Naive thymus-derived CD4-positive, alpha-beta T cell (primary cell): ENCODE measurements at regions of chr15 and their contacts with region 1.

Region 1: DNA sequence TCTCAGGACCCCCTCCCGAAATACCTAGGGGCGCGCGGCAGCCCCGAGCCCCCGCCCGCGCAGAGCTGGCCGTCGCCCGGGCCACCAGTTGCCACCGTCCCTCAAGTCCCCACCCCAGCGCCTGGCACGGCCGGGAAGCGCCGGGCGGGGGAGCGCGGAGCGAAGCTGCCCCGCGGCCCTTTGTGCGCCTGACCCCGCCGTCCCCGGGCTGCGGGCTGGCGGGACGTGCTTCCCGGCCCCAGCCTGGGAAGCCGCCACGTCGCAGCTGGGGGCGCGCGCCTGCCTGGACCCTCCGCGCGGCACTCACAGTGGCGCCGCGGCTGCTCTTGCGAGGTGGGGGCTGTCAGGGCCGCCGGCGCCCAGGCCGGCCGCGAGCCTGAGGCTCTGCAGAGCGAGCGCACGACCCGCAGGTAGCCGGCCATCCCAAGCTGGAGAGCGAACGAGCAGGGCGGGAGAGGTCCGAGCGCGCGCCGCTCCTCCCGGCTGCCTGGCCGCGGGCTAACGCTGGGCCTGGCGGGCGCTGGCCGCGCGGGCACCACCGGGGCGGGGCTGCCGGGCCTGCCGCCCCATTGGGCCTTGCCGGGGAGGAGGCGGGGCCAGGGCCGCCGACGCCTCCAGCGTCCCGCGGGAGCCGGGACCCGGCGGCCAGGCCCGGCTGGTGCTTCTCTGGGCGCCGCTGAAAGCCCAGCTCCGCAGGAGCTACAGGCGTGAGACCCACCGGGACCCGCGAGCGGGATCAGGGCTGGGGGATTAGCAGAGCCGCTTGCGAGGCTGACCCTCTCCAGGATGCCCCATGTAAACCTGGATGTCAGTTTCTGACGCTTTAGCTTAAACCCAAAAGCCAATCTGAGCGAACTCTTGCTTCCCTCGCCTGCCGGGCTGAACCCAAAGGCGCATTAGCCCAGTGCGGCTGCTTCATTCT is at the start of gene IDH2:
- DNase-seq: peak; percentile 60 to 86 (median 74)
- ATAC-seq: peak; percentile 89
- H3K4me3 ChIP-seq: peak within 1 kb of the TSS; percentile 78
- H3K4me3 Mint-ChIP-seq: peak within 1 kb of the TSS; percentile 82 to 97 (median 92)
- H3K27ac ChIP-seq: peak within 1 kb of the TSS; percentile 90
- H3K27ac Mint-ChIP-seq: peak within 1 kb of the TSS; percentile 94 to 99 (median 98)
- H3K4me1 ChIP-seq: peaks cover 38 to 44% of the 10 kb centered on the region in 2 donors
- H3K4me1 Mint-ChIP-seq: peaks cover 43 to 60% (median 52%) of the 10 kb centered on the region in 7 donors
- H3K27me3 ChIP-seq: no peaks in the 10 kb centered on the region
- H3K27me3 Mint-ChIP-seq: peaks cover 0 to 24% (median 0%) of the 10 kb centered on the region in 5 donors
- total RNA-seq, gene IDH2: 32.4 to 230 (median 33.7) TPM

Region 2: DNA sequence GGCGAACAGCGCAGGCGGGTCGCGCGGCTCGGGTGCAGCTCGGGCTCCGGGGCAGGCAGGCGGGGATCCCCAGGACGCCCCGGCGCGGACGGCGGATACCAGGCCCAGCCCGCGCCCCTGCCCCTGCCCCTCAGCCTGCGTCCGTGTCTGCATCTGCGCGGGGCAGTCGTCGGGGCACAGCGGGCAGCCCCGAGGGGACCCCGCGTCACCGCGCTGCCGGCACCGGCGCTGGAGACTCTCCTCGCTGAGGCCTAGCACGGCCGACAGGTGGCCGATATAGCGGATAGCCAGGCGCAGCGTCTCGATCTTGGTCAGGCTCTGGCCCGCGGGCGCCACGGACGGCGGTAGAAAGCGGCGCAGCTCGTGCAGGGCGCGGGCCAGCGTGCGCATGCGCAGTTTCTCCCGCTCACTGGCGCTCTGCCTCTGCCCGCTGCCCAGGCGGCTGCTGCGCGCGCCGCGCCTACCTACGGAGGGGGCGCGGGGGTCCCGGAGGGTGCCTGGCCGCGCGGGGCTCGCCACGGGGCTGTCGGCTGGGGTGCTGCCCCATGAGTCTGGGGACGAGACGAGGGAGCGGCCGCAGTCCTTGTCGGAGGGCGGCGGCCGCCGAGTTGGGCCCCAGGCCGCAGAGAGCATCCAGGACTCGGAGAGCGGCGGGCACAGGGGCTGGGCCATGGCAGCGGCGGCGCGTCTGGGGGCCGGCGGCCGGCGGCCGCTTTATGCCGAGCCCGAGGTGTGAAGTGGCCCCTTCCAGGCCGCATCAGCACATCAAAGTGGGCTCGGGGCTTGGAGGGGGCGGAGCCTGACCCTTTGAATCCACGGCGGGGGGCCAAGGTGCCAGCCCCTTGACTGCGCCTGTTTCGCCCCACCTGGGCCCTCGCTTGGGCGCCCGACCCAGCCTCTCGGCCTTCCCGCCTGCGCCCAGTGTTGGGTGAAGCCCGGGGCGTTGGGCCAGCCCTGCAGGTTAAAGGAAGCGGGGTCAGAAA is 351.4 kb before region 1 on chr15 and contains the start of gene MESP1:
- CTCF ChIA-PET with region 1: no interaction called
- POLR2A ChIA-PET with region 1: no interaction called
- intact Hi-C with region 1: loop called in 1 of 2 experiments (anchors 5 kb)
- DNase-seq: peak; percentile 71 to 89 (median 82)
- ATAC-seq: peak; percentile 94
- H3K4me3 ChIP-seq: peak within 1 kb of the TSS; percentile 64
- H3K4me3 Mint-ChIP-seq: peak within 1 kb of the TSS; percentile 63 to 83 (median 77)
- H3K27ac ChIP-seq: peak within 1 kb of the TSS; percentile 31
- H3K27ac Mint-ChIP-seq: peak within 1 kb of the TSS in 3 of 9 donors; percentile 25 to 63 (median 53)
- H3K4me1 ChIP-seq: no peaks in the 10 kb centered on the region
- H3K4me1 Mint-ChIP-seq: peaks cover 0 to 8% (median 3%) of the 10 kb centered on the region in 7 donors
- H3K27me3 ChIP-seq: no peaks in the 10 kb centered on the region
- H3K27me3 Mint-ChIP-seq: peaks cover 0 to 50% (median 15%) of the 10 kb centered on the region in 5 donors
- total RNA-seq, gene MESP1: 0.38 to 1.2 (median 0.50) TPM in 3 of 5 experiments, not detected in the others

Region 3: GRCh38 chr15:90001683-90002427 is 100.4 kb before region 1 on chr15:
- CTCF ChIA-PET with region 1: no interaction called
- POLR2A ChIA-PET with region 1: interaction called, 3 read pairs
- intact Hi-C with region 1: loop called in 1 of 2 experiments (anchors 2 kb)
- DNase-seq: peak; percentile 41 to 78 (median 65)
- ATAC-seq: peak; percentile 68
- H3K4me3 ChIP-seq: no peak overlapping the region
- H3K4me3 Mint-ChIP-seq: peak overlapping the region; percentile 85 to 98 (median 90)
- H3K27ac ChIP-seq: peak overlapping the region; percentile 61
- H3K27ac Mint-ChIP-seq: peak overlapping the region; percentile 85 to 97 (median 91)
- H3K4me1 ChIP-seq: peaks cover 6 to 8% of the 10 kb centered on the region in 2 donors
- H3K4me1 Mint-ChIP-seq: peaks cover 37 to 57% (median 48%) of the 10 kb centered on the region in 7 donors
- H3K27me3 ChIP-seq: no peaks in the 10 kb centered on the region
- H3K27me3 Mint-ChIP-seq: peaks cover 0 to 6% (median 0%) of the 10 kb centered on the region in 5 donors

Region 4: DNA sequence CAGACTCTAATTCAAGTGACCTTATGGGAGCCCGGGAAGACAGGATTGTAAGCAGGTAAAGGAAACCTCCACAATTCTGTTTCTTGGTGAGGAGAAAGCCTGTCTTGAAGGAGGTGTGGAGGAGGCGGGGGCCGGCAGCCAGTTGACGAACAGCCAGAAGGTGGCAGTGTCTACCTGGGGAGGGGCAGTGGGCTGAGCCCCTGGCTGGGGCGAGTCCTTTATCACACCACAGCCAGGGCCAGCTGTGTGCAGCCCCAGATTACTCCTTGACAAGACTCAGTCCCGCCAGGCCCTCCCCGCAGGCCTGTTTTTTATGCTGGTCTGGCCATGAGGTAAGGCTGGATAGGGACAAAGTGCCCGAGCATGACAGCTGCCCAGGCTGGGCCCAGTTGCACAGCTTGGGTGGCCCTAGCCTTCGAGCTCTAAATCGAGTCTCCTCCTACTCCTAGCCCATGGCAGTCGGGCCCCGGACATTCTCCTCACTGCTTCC is 41.0 kb after region 1 on chr15:
- CTCF ChIA-PET with region 1: interaction called, 11 read pairs
- POLR2A ChIA-PET with region 1: interaction called, 3 read pairs
- intact Hi-C with region 1: loop called (anchors 1 kb)
- DNase-seq: peak; percentile 50 to 67 (median 58)
- ATAC-seq: peak; percentile 88
- H3K4me3 ChIP-seq: peak overlapping the region; percentile 9
- H3K4me3 Mint-ChIP-seq: peak overlapping the region; percentile 49 to 77 (median 67)
- H3K27ac ChIP-seq: no peak overlapping the region
- H3K27ac Mint-ChIP-seq: peak overlapping the region in 8 of 9 donors; percentile 37 to 92 (median 79)
- H3K4me1 ChIP-seq: peaks cover 0 to 4% of the 10 kb centered on the region in 2 donors
- H3K4me1 Mint-ChIP-seq: peaks cover 6 to 36% (median 26%) of the 10 kb centered on the region in 7 donors
- H3K27me3 ChIP-seq: no peaks in the 10 kb centered on the region
- H3K27me3 Mint-ChIP-seq: peaks cover 0 to 2% (median 0%) of the 10 kb centered on the region in 5 donors

Region 5: DNA sequence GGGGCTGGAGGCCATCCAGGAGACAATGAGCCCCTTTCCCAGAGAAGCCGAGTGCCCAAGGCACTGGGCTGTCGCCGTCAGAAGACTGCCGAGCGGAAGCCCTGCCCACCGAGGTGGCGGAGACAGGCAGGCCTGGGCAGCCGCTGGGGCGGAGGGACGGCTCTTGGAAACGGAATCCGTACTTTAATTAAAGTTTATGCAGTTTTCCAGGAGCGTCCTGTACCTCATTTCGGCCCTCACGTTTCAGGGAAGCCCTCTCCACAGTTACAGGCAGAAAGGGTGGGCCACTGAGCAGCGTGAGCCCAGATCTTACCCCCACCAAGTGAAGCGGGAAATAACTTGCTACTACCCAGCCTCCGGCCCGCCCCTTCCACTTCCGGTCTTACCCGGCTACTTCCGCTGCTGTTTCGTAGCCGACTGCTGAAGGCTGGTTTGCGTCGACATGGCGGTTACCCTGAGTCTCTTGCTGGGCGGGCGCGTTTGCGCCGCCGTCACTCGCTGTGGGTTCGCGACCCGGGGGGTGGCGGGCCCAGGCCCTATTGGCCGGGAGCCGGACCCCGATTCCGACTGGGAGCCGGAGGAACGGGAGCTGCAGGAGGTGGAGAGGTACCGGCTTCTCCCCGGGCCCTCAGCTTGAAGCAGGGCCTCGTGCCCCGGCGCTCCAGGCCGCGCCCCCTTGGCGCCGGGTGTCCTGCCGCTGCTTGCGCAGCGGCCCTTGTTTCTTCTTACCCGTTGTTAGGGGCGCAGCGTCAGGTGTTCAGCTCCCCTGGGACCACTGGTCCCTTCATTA is 163.2 kb after region 1 on chr15 and contains the start of gene NGRN:
- CTCF ChIA-PET with region 1: no interaction called
- POLR2A ChIA-PET with region 1: interaction called, 5 read pairs
- intact Hi-C with region 1: loop called in 1 of 2 experiments (anchors 2 kb)
- DNase-seq: peak; percentile 81 to 96 (median 93)
- ATAC-seq: peak; percentile 94
- H3K4me3 ChIP-seq: peak within 1 kb of the TSS; percentile 84
- H3K4me3 Mint-ChIP-seq: peak within 1 kb of the TSS; percentile 95 to 99 (median 97)
- H3K27ac ChIP-seq: peak within 1 kb of the TSS; percentile 96
- H3K27ac Mint-ChIP-seq: peak within 1 kb of the TSS; percentile 98 to 100 (median 99)
- H3K4me1 ChIP-seq: peaks cover 36 to 40% of the 10 kb centered on the region in 2 donors
- H3K4me1 Mint-ChIP-seq: peaks cover 22 to 60% (median 48%) of the 10 kb centered on the region in 7 donors
- H3K27me3 ChIP-seq: no peaks in the 10 kb centered on the region
- H3K27me3 Mint-ChIP-seq: no peaks in the 10 kb centered on the region
- total RNA-seq, gene NGRN: 34.1 to 51.5 (median 48.4) TPM